HCT116 (cell line): ENCODE measurements at regions of chr1 and their contacts with region 1.

Region 1: GRCh38 chr1:204477036-204477740 is 17.4 kb downstream of the PIK3C2B start:
- DNase-seq: no peak
- ATAC-seq: no peak
- H3K4me3 ChIP-seq: no peak overlapping the region
- H3K27ac ChIP-seq: no peak overlapping the region; the same call in 1 of the 2 replicates
- H3K4me1 ChIP-seq: peaks cover 49 to 58% of the 10 kb centered on the region in 2 experiments
- H3K27me3 ChIP-seq: no peaks in the 10 kb centered on the region
- CTCF ChIP-seq: no peak
- POLR2A ChIP-seq: no peak
- RAD21 ChIP-seq: no peak

Region 2: GRCh38 chr1:204446370-204447111 is 30.6 kb before region 1 on chr1:
- CTCF ChIA-PET with region 1: interaction called, 16 read pairs
- POLR2A ChIA-PET with region 1: no interaction called
- RAD21 ChIA-PET with region 1: no interaction called
- intact Hi-C with region 1: no loop called
- DNase-seq: no peak
- ATAC-seq: peak; percentile 87
- H3K4me3 ChIP-seq: no peak overlapping the region
- H3K27ac ChIP-seq: no peak overlapping the region
- H3K4me1 ChIP-seq: peaks cover 17 to 45% of the 10 kb centered on the region in 2 experiments
- H3K27me3 ChIP-seq: no peaks in the 10 kb centered on the region
- CTCF ChIP-seq: peak; percentile 70 to 87 (median 76)
- POLR2A ChIP-seq: no peak
- RAD21 ChIP-seq: peak; percentile 88

Region 3: GRCh38 chr1:204487256-204487615 is 10.0 kb after region 1 on chr1:
- CTCF ChIA-PET with region 1: interaction called, 10 read pairs
- POLR2A ChIA-PET with region 1: interaction called, 5 read pairs
- RAD21 ChIA-PET with region 1: no interaction called
- intact Hi-C with region 1: no loop called
- DNase-seq: no peak
- ATAC-seq: 0 out of 2 replicates have a peak, but pooled peaks have one; percentile 20
- H3K4me3 ChIP-seq: no peak overlapping the region
- H3K27ac ChIP-seq: no peak overlapping the region
- H3K4me1 ChIP-seq: peaks cover 18 to 40% of the 10 kb centered on the region in 2 experiments
- H3K27me3 ChIP-seq: no peaks in the 10 kb centered on the region
- CTCF ChIP-seq: no peak
- POLR2A ChIP-seq: no peak
- RAD21 ChIP-seq: no peak

Region 4: GRCh38 chr1:204494281-204495077 is 17.3 kb after region 1 on chr1 and contains the start of gene PIK3C2B:
- CTCF ChIA-PET with region 1: interaction called, 11 read pairs
- POLR2A ChIA-PET with region 1: interaction called, 3 read pairs
- RAD21 ChIA-PET with region 1: interaction called in 1 of 2 experiments, 5 read pairs
- intact Hi-C with region 1: no loop called
- DNase-seq: peak; percentile 52
- ATAC-seq: peak; percentile 87
- H3K4me3 ChIP-seq: peak within 1 kb of the TSS; percentile 80 to 94
- H3K27ac ChIP-seq: peak within 1 kb of the TSS; percentile 97
- H3K4me1 ChIP-seq: peaks cover 17 to 36% of the 10 kb centered on the region in 2 experiments
- H3K27me3 ChIP-seq: no peaks in the 10 kb centered on the region
- CTCF ChIP-seq: peak in 2 of 3 experiments; percentile 25 to 29; a peak in 3 of 6 replicates
- POLR2A ChIP-seq: peak; percentile 68
- RAD21 ChIP-seq: peak; percentile 36; the same call in 1 of the 2 replicates
- total RNA-seq, gene PIK3C2B: 17.4 TPM